Panc1 (cell line): ENCODE measurements at regions of chr15 and their contacts with region 1.

Region 1: GRCh38 chr15:61097043-61097442 is 132.1 kb downstream of the RORA start:
- DNase-seq: no peak
- ATAC-seq: no peak
- H3K4me3 ChIP-seq: no peak overlapping the region
- H3K27ac ChIP-seq: no peak overlapping the region
- H3K4me1 ChIP-seq: no peaks in the 10 kb centered on the region
- H3K27me3 ChIP-seq: peaks cover 16% of the 10 kb centered on the region
- CTCF ChIP-seq: no peak

Region 2: DNA sequence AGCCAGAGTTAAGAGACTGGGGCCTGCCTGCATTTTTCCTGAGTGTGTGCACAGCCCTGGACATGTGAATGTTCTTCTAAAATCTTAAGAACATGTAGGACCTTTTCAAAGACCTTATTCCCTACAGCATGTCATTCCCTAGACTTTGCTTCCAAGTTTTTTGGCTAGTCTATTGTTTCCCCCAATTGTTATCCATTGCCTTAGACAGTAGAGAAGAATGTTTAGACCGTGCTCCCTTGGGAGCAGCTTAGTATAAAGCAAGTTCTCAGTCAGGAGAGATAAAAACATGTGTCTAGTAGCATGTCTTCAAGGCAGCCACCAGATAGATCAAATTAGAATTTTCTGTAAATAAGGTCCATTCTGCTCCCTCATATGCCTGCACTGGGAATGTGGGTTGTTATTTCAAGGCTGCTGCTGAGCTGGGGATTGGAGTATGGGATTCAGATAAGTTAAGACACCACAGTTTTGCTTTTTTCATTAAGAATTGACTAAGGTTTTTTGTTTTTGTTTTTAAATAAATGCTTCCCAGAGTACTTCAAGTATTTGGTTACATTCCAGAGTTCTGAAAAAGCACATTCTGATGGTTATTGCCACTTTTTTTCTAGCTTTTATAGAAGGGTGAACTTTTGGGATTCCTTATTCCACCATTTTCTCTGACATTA is 114.7 kb before region 1 on chr15:
- CTCF ChIA-PET with region 1: interaction called, 10 read pairs
- POLR2A ChIA-PET with region 1: no interaction called
- in situ Hi-C with region 1: no loop called
- intact Hi-C with region 1: no loop called
- DNase-seq: no peak
- ATAC-seq: no peak
- H3K4me3 ChIP-seq: no peak overlapping the region
- H3K27ac ChIP-seq: no peak overlapping the region
- H3K4me1 ChIP-seq: no peaks in the 10 kb centered on the region
- H3K27me3 ChIP-seq: no peaks in the 10 kb centered on the region; the same call in 1 of the 2 replicates
- CTCF ChIP-seq: no peak

Region 3: GRCh38 chr15:61216519-61216918 is 119.5 kb after region 1 on chr15:
- CTCF ChIA-PET with region 1: no interaction called
- POLR2A ChIA-PET with region 1: no interaction called
- in situ Hi-C with region 1: no loop called
- intact Hi-C with region 1: no loop called
- DNase-seq: no peak
- ATAC-seq: no peak
- H3K4me3 ChIP-seq: no peak overlapping the region
- H3K27ac ChIP-seq: no peak overlapping the region
- H3K4me1 ChIP-seq: no peaks in the 10 kb centered on the region
- H3K27me3 ChIP-seq: peaks cover 4% of the 10 kb centered on the region
- CTCF ChIP-seq: no peak; the same call in 1 of the 2 replicates